ENCODE measurements at regions of chr13 and their contacts with region 1.

Region 1: GRCh38 chr13:46489586-46490023 is 63.4 kb upstream of the LRCH1 start:
- DNase-seq: peak; percentile 82
- H3K4me3 ChIP-seq: peak overlapping the region; percentile 33; the same call in 1 of the 2 replicates
- CTCF ChIP-seq: no peak

Region 2: GRCh38 chr13:46235286-46235685 is 254.3 kb before region 1 on chr13:
- CTCF ChIA-PET with region 1: no interaction called
- POLR2A ChIA-PET with region 1: no interaction called
- DNase-seq: no peak
- H3K4me3 ChIP-seq: no peak overlapping the region
- CTCF ChIP-seq: no peak

Region 3: GRCh38 chr13:46728777-46729176 is 239.2 kb after region 1 on chr13:
- CTCF ChIA-PET with region 1: interaction called, 15 read pairs
- POLR2A ChIA-PET with region 1: no interaction called
- DNase-seq: no peak
- H3K4me3 ChIP-seq: no peak overlapping the region
- CTCF ChIP-seq: no peak

Measured in AG04449 (cell line).